Activated T-helper 1 cell treated with anti-CD3 and anti-CD28 coated beads, Interleukin-12 subunit alpha, Interleukin-12 subunit beta, Interleukin-2, Interleukin-4 antibody, amounts not matched to agents 30 ng/mL and 10 ng/mL and 1 ng/mL, durations not matched to agents 14 hours and 24 hours and 36 hours (primary cell): ENCODE measurements at regions of chr10 and their contacts with region 1.

Region 1: DNA sequence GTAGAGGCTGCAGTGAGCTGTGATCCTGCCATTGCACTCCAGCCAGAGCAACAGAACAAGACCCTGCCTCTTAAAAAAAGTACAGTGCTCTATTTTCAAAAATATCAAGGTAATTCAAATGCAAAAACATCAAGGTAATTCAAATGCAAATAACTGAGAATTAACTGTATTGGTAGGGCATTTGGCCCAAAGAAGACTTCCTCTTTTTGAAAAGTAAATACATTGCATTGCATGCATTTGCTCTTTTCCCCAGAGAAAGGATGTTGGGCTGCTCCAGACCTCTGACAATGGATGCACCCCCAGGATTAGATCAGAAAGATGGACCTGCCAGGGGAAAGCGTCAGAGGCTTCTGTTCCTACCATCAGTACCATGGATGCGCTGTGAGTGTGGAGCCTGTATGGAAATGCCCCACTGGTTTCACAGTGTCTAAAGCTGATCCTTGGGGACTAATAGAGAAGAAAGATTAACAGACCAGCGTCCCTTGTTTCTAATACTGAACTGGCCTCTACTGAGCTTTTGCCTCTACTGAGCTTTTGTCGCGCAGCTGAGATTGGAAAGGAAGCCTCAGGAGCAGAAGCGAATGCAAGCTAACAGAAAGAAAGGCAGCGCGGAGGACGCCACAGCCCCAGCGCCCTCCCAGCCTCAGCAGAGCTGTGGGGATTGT is 93.5 kb upstream of the LYZL2 start:
- DNase-seq: no peak
- H3K4me3 Mint-ChIP-seq: no peak overlapping the region
- H3K27ac Mint-ChIP-seq: no peak overlapping the region
- H3K4me1 Mint-ChIP-seq: peaks cover 11% of the 10 kb centered on the region
- H3K27me3 Mint-ChIP-seq: no peaks in the 10 kb centered on the region

Region 2: GRCh38 chr10:30671026-30671616 is 52.0 kb before region 1 on chr10:
- intact Hi-C with region 1: loop called (anchors 1 kb)
- DNase-seq: peak; percentile 35
- H3K4me3 Mint-ChIP-seq: peak overlapping the region; percentile 43
- H3K27ac Mint-ChIP-seq: no peak overlapping the region
- H3K4me1 Mint-ChIP-seq: peaks cover 9% of the 10 kb centered on the region
- H3K27me3 Mint-ChIP-seq: peaks cover 16% of the 10 kb centered on the region

Region 3: DNA sequence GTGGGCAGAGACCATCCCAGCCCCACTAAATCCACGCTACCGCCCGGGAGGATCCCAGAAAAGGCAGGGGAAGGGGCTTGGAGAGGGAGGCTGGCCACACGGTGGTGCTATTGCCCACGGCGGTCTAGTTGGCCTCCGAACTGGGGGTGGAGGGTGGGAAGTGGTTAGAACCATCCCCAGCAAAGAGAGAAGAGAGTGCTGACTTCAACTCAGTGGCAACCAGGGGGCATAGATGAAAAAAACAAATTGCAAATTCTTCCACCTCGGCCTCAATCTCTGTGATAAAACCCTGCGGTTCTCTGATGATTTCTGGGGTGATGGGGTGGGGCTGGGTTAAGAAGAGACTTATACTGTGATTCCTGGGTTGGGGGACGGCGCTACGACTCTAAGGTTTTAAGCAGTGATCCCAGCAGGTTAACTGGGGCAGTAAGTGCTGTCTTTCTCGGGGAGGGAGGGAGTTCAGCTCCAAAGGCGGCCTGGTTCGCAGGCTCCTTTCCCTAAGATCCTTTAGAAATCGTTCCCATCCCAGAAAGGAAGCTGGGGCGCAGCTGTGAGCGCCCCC is 60.9 kb after region 1 on chr10:
- intact Hi-C with region 1: loop called (anchors 1 kb)
- DNase-seq: peak; percentile 67
- H3K4me3 Mint-ChIP-seq: peak overlapping the region; percentile 79
- H3K27ac Mint-ChIP-seq: peak overlapping the region; percentile 75
- H3K4me1 Mint-ChIP-seq: peaks cover 29% of the 10 kb centered on the region
- H3K27me3 Mint-ChIP-seq: peaks cover 7% of the 10 kb centered on the region

Region 4: DNA sequence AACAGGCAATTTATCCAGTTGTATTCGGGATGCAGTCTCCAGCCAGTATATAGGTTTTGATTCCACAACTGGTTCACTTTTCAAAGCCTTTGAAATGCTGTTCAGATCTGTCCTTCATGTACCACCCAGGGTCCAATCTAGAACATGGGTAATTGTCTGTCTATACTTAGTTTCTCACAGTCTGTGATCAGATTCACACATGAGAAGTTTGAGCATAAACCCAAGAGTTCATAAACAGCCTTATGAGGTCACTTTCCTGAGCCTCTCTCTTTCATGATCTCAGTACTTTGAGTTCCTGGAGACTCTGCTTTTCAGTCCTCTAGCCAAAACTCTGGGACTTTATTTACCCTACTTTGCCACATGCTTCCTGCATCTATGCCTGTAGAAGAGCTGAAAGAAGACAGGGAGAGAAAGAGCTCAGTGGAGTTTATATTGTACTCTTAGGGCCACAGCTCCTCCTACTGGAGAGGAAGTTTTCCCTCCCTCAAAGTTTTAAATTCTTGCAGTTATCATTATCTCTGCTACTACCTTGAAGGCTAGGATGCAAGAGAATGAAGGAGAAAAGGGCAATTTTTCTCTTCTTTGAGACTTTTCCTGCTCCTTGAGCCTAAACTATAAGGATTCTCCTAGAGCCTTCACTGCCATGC is 767.9 kb after region 1 on chr10:
- intact Hi-C with region 1: loop called (anchors 2 kb)
- DNase-seq: no peak
- H3K4me3 Mint-ChIP-seq: no peak overlapping the region
- H3K27ac Mint-ChIP-seq: no peak overlapping the region
- H3K4me1 Mint-ChIP-seq: peaks cover 19% of the 10 kb centered on the region
- H3K27me3 Mint-ChIP-seq: no peaks in the 10 kb centered on the region

Region 5: DNA sequence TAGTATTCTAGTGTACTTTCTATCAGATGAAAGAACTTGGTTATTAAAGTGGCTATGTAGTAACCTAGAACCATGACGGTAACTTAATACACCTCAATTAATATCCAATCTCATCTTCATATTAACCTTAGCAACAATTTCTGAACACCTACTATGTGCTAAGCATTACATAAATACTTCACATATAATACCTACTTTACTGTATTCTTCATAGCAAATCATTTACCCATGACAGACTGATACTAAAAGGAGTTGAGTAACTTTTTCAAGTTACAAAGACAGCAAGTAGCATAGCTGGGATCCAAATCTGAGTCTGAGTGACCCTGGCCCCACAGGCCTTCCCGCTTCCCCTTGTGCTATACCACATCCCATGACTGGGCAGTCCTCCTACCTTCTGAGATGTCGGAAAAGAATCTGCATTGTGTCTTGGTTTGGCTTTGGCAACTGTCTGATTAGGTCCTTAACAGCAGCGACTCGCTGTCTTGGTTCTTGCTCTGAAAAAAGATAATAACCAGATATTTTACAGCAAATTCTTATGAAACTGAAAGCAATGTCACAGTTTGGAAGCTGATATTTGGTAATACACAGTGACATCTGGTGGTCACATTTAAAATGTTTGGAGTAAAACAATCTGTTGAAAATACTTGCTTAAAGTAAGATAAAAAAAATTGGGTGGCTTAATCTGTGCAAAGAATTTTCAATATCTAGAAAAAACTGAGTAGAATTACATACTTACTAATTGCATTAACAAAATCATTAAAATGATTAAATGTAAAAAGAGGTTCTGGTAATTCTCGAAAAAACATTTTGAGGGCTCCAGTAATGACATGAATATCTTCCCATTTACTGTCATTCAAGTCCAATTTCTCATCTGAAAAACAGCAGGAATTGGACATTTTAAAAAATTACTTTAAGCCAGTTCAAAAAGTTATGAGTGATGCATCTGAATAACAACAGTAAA is 1085.5 kb after region 1 on chr10:
- intact Hi-C with region 1: loop called (anchors 1 kb)
- DNase-seq: peak; percentile 2
- H3K4me3 Mint-ChIP-seq: peak overlapping the region; percentile 50
- H3K27ac Mint-ChIP-seq: peak overlapping the region; percentile 57
- H3K4me1 Mint-ChIP-seq: peaks cover 7% of the 10 kb centered on the region
- H3K27me3 Mint-ChIP-seq: peaks cover 3% of the 10 kb centered on the region